CD14-positive monocyte (primary cell): ENCODE measurements at regions of chr1 and their contacts with region 1.

Region 1: GRCh38 chr1:8848663-8849386 is 29.7 kb downstream of the ENO1 start:
- DNase-seq: peak; percentile 64 to 73 (median 71)
- H3K4me3 ChIP-seq: no peak overlapping the region
- H3K4me3 Mint-ChIP-seq: no peak overlapping the region
- H3K27ac ChIP-seq: no peak overlapping the region
- H3K27ac Mint-ChIP-seq: no peak overlapping the region
- H3K4me1 ChIP-seq: no peaks in the 10 kb centered on the region
- H3K4me1 Mint-ChIP-seq: peaks cover 3% of the 10 kb centered on the region
- H3K27me3 ChIP-seq: no peaks in the 10 kb centered on the region
- H3K27me3 Mint-ChIP-seq: peaks cover 0 to 2% (median 1%) of the 10 kb centered on the region in 3 donors
- CTCF ChIP-seq: peak; percentile 97

Region 2: DNA sequence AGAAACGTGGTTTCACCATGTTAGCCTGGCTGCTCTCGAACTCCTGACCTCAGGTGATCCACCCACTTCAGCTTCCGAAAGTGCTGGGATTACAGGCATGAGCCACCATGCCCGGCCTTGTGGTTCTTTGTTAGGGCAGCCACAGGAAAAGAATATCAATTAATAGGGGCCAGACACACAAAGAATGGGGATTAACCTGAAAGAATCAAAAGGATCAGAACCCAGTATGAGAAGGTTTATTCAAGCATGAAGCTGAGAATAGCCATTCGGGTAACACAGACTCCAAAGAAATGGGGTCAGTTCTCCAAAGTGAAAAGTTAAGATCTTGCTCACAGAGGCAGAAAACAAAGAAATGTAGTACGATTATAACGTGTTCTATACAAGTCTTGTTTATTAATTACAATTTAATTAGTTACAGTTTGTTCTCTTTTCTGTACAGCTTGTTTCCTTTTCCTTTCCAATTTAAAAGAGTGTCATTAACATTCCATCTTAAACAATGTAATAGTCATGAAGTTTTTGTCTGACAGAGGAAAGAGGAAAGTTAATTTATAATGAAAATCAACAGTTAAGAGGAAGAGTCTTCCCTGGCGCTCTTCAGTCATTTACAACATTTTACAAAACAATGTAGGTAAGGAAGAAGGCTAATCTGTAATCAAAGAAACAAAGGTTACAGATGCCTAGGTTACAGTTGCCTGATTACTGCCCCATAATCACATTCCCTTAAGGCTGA is 582.2 kb before region 1 on chr1:
- intact Hi-C with region 1: no loop called
- DNase-seq: no peak
- H3K4me3 ChIP-seq: no peak overlapping the region
- H3K4me3 Mint-ChIP-seq: no peak overlapping the region
- H3K27ac ChIP-seq: no peak overlapping the region
- H3K27ac Mint-ChIP-seq: no peak overlapping the region
- H3K4me1 ChIP-seq: no peaks in the 10 kb centered on the region
- H3K4me1 Mint-ChIP-seq: peaks cover 10% of the 10 kb centered on the region
- H3K27me3 ChIP-seq: no peaks in the 10 kb centered on the region
- H3K27me3 Mint-ChIP-seq: peaks cover 10 to 12% (median 12%) of the 10 kb centered on the region in 3 donors
- CTCF ChIP-seq: no peak

Region 3: DNA sequence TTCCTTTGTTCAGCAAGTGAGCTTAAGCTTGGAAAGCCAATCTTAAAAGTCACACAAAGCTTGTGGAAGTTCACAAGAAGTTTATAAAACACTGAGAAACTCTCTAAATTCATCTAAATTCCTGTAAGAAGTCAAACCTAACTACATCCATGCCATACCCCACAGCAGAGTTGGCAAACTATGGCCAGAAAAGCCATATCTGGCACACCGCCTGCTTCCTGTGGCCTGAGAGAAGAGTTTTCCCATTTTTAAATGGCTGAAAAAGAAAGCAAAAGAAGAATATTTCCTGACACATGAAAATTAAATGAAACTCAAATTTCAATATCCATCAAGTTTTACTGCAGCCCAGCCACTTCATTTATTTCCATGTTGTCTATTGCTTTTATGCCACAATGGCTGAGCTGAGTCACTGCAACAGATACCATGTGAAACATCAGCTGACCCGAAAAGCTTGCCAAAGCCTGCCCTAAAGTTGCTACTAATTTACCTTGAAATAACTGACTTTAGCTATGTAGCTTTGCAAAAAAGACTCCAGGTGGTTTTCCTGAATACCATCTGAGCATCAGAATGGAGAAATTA is 293.8 kb before region 1 on chr1:
- intact Hi-C with region 1: loop called (anchors 5 to 10 kb)
- DNase-seq: peak in 1 of 3 donors; percentile 11
- H3K4me3 ChIP-seq: no peak overlapping the region
- H3K4me3 Mint-ChIP-seq: no peak overlapping the region
- H3K27ac ChIP-seq: no peak overlapping the region
- H3K27ac Mint-ChIP-seq: no peak overlapping the region
- H3K4me1 ChIP-seq: no peaks in the 10 kb centered on the region
- H3K4me1 Mint-ChIP-seq: peaks cover 3% of the 10 kb centered on the region
- H3K27me3 ChIP-seq: no peaks in the 10 kb centered on the region
- H3K27me3 Mint-ChIP-seq: no peaks in the 10 kb centered on the region
- CTCF ChIP-seq: no peak